Calu3 (cell line): ENCODE measurements at regions of chr1 and their contacts with region 1.

Region 1: DNA sequence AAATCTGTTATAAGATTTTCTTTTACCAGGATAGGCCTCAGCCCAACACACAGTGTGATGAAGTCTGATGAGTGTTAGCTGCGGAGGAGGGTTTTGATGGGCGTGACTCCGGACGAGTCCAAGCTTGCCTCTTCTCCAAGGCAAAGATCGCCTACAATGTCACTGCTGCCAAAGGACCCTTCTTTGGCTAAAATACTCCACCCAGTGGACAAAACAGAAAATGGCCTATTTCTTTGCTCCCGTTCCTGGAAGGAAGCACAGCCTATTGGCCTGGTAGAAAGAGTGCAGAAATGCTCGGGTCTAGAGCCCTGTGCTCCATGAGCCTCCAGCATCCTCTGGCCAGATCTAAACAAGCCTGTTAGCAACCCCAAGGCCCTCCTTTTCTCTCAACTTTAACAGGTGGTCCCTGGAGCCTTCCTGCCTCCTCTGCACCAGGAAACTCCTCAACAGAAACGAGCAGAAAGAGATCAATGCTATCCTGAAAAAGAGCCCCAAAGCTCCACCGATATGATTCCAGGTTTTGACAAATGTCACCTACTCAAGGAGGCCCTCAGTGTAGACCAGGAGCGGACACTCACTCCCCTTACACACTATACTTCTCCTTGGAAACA is 3.4 kb upstream of the CASQ2 start:
- DNase-seq: peak; percentile 58
- H3K4me3 Mint-ChIP-seq: no peak overlapping the region
- H3K27ac Mint-ChIP-seq: no peak overlapping the region
- H3K4me1 Mint-ChIP-seq: no peaks in the 10 kb centered on the region
- H3K27me3 Mint-ChIP-seq: no peaks in the 10 kb centered on the region
- CTCF ChIP-seq: peak; percentile 47

Region 2: DNA sequence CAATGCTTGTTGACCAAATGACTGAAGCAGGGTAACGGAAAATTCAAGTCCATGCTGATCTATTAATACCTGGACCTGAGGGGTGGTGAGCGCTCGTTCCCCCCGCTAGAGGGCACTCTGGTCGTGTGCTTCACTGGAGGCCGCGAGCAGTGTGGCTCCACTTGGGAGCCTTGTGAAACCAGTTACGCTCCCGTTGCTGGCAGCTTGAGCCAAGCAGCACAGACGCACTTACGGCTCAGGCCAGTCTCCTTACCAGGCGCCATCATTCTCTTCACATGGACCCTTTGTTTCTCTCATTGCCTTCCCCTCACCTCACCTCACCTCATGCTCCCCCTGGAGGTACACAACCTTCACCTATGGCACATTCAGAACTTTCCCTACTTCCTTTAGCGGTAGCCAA is 633.0 kb before region 1 on chr1:
- CTCF ChIA-PET with region 1: no interaction called
- intact Hi-C with region 1: loop called (anchors 10 kb)
- DNase-seq: peak; percentile 80
- H3K4me3 Mint-ChIP-seq: no peak overlapping the region
- H3K27ac Mint-ChIP-seq: no peak overlapping the region
- H3K4me1 Mint-ChIP-seq: peaks cover 21% of the 10 kb centered on the region
- H3K27me3 Mint-ChIP-seq: peaks cover 14% of the 10 kb centered on the region
- CTCF ChIP-seq: peak; percentile 67

Region 3: GRCh38 chr1:115793162-115793561 is 21.2 kb after region 1 on chr1:
- CTCF ChIA-PET with region 1: no interaction called
- intact Hi-C with region 1: loop called (anchors 1 kb)
- DNase-seq: no peak
- H3K4me3 Mint-ChIP-seq: no peak overlapping the region
- H3K27ac Mint-ChIP-seq: no peak overlapping the region
- H3K4me1 Mint-ChIP-seq: no peaks in the 10 kb centered on the region
- H3K27me3 Mint-ChIP-seq: peaks cover 20% of the 10 kb centered on the region
- CTCF ChIP-seq: no peak